MCF 10A (cell line): ENCODE measurements at regions of chr14 and their contacts with region 1.

Region 1: GRCh38 chr14:57871459-57872080 is 5.7 kb upstream of the SLC35F4 start:
- DNase-seq: peak; percentile 71
- H3K4me3 Mint-ChIP-seq: no peak overlapping the region
- H3K27ac Mint-ChIP-seq: no peak overlapping the region
- H3K4me1 Mint-ChIP-seq: peaks cover 6% of the 10 kb centered on the region
- H3K27me3 Mint-ChIP-seq: no peaks in the 10 kb centered on the region
- CTCF ChIP-seq: peak; percentile 84

Region 2: DNA sequence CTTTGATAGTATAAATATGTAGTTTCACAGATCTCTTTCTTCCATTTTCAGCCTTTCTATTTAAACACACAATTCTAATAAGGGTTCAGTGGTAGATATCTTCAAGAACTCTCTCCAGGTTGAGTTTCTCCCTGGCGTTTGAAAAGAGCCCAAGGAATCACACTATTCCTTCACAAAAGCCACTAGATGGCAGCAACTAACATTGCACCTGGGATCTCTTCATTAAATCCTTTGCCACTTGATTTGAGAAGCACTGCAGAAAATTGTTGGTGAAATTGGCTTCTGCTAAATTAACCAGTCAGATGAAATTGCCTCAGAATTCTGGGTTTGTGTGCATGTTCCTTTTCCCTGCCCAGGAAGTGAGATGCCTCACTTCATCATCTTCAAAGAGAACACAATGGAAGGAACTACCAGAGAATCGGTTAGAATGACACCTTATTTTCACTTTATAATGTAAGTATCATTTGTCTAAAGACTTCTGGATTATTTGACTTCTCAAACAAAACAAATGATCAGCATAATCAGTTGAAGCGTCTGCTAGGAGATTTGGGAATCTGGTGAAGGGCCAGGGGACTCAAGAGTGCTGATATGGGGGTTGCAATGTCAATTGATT is 384.7 kb before region 1 on chr14:
- CTCF ChIA-PET with region 1: interaction called, 13 read pairs
- POLR2A ChIA-PET with region 1: interaction called, 3 read pairs
- intact Hi-C with region 1: loop called (anchors 2 kb)
- DNase-seq: peak; percentile 64
- H3K4me3 Mint-ChIP-seq: no peak overlapping the region
- H3K27ac Mint-ChIP-seq: no peak overlapping the region
- H3K4me1 Mint-ChIP-seq: no peaks in the 10 kb centered on the region
- H3K27me3 Mint-ChIP-seq: no peaks in the 10 kb centered on the region
- CTCF ChIP-seq: peak; percentile 62

Region 3: DNA sequence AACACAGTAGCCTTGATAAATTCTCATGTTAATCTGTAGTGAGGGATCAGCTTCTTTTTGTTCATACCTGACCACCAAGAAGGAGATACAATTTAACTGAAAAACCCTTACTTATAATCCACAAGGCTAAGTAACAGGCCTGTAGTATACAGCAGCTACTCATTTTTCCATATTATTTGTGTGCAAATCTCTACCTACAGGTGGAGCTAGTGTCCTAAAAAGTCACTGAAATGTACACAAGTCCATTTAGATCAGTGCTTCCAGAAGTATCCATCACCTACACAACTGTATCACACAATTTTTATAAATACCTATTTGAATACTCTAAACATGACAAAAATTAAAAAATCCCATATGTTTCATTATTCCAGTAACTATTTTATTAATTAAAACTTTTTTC is 178.9 kb before region 1 on chr14:
- CTCF ChIA-PET with region 1: interaction called, 77 read pairs
- POLR2A ChIA-PET with region 1: no interaction called
- intact Hi-C with region 1: loop called (anchors 1 kb)
- DNase-seq: peak; percentile 69
- H3K4me3 Mint-ChIP-seq: no peak overlapping the region
- H3K27ac Mint-ChIP-seq: no peak overlapping the region
- H3K4me1 Mint-ChIP-seq: no peaks in the 10 kb centered on the region
- H3K27me3 Mint-ChIP-seq: no peaks in the 10 kb centered on the region
- CTCF ChIP-seq: peak; percentile 80

Region 4: DNA sequence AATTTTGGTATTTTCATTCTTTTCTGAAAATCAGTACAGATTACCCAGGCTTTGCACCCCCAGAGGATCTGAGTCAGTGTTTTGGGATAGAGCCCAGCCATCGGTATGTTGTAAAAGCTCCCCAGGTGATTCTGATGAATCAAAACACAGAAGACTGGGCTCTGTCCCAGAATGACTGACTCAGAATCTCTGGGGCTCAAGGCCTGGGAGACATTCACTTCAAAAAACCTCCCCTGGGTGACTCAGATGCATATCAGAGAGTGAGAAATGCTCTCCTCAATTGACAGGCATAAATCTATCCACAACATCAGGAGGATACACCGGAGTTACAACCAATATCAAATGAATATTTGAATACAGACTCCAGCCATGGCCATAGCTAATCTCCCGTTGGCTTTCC is 38.2 kb before region 1 on chr14:
- CTCF ChIA-PET with region 1: interaction called, 7 read pairs
- POLR2A ChIA-PET with region 1: no interaction called
- intact Hi-C with region 1: loop called (anchors 2 kb)
- DNase-seq: peak; percentile 99
- H3K4me3 Mint-ChIP-seq: no peak overlapping the region
- H3K27ac Mint-ChIP-seq: no peak overlapping the region
- H3K4me1 Mint-ChIP-seq: peaks cover 47% of the 10 kb centered on the region
- H3K27me3 Mint-ChIP-seq: no peaks in the 10 kb centered on the region
- CTCF ChIP-seq: no peak

Region 5: GRCh38 chr14:58072288-58073071 is 200.9 kb after region 1 on chr14:
- CTCF ChIA-PET with region 1: interaction called, 13 read pairs
- POLR2A ChIA-PET with region 1: interaction called, 4 read pairs
- intact Hi-C with region 1: loop called (anchors 1 kb)
- DNase-seq: peak; percentile 79
- H3K4me3 Mint-ChIP-seq: no peak overlapping the region
- H3K27ac Mint-ChIP-seq: no peak overlapping the region
- H3K4me1 Mint-ChIP-seq: peaks cover 1% of the 10 kb centered on the region
- H3K27me3 Mint-ChIP-seq: no peaks in the 10 kb centered on the region
- CTCF ChIP-seq: peak; percentile 59